ENCODE measurements at regions of chr7 and their contacts with region 1.

Region 1: DNA sequence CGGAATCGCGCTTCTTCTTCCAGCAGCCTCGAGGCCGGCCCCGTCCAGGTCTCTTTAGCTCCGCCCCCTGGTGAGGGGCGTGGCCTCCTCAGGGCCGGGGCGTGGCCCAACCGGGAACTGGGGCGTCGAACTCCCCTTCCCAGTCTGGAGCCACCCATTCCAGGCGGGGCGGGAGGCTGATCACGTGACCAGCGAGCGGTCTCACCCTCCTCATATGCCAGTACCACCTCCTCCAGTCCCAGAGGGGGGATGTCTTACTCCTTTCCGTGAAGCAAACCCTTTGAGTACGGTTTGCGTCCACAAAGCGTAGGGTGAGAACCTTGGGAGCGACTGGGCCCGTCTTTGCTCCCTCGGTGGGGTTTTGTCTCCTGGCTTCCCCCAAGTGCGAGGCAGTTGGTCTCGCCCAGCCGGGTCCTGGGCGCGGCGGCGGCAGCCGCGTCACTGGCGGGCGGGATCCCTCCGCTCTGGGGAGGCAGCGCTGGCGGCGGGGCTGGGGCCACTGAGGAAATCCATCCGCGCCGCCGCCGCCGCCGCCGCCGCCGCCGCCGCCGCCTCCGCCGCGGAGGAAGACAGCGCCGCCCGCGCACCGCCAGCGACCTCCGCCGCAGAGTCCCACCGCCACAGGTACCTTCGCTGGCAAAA is at the start of gene GNB2:
- DNase-seq: peak; percentile 99
- ATAC-seq: peak; percentile 92 to 95 (median 94)
- H3K4me3 ChIP-seq: peak within 1 kb of the TSS; percentile 95 to 99 (median 96)
- H3K27ac ChIP-seq: peak within 1 kb of the TSS; percentile 78 to 100 (median 98)
- H3K4me1 ChIP-seq: peaks cover 0 to 34% (median 22%) of the 10 kb centered on the region in 9 donors
- H3K27me3 ChIP-seq: no peaks in the 10 kb centered on the region
- CTCF ChIP-seq: no peak
- total RNA-seq, gene GNB2: 91.6 to 150 (median 106) TPM

Region 2: GRCh38 chr7:100429637-100430492 is 243.6 kb before region 1 on chr7 and contains the start of gene MEPCE:
- intact Hi-C with region 1: loop called in 1 of 10 experiments (anchors 5 kb)
- DNase-seq: peak; percentile 97
- ATAC-seq: peak; percentile 72 to 85 (median 77)
- H3K4me3 ChIP-seq: peak within 1 kb of the TSS; percentile 77 to 100 (median 92)
- H3K27ac ChIP-seq: peak within 1 kb of the TSS; percentile 98 to 100 (median 99)
- H3K4me1 ChIP-seq: peaks cover 8 to 55% (median 38%) of the 10 kb centered on the region in 9 donors
- H3K27me3 ChIP-seq: no peaks in the 10 kb centered on the region
- CTCF ChIP-seq: no peak
- total RNA-seq, gene MEPCE: 17.2 to 27.7 (median 23.0) TPM

Region 3: GRCh38 chr7:100586266-100587025 is 87.0 kb before region 1 on chr7 and contains the start of gene FBXO24:
- intact Hi-C with region 1: loop called in 1 of 10 experiments (anchors 1 kb)
- DNase-seq: peak; percentile 100
- ATAC-seq: peak; percentile 91 to 97 (median 94)
- H3K4me3 ChIP-seq: peak within 1 kb of the TSS; percentile 80 to 100 (median 96)
- H3K27ac ChIP-seq: peak within 1 kb of the TSS; percentile 90 to 98 (median 94)
- H3K4me1 ChIP-seq: peaks cover 9 to 67% (median 52%) of the 10 kb centered on the region in 9 donors
- H3K27me3 ChIP-seq: peaks cover 0 to 14% (median 0%) of the 10 kb centered on the region in 7 donors
- CTCF ChIP-seq: peak in 1 of 9 donors; percentile 10
- total RNA-seq, gene FBXO24: 0.15 to 0.66 (median 0.40) TPM in 8 of 10 donors, not detected in the others

Region 4: DNA sequence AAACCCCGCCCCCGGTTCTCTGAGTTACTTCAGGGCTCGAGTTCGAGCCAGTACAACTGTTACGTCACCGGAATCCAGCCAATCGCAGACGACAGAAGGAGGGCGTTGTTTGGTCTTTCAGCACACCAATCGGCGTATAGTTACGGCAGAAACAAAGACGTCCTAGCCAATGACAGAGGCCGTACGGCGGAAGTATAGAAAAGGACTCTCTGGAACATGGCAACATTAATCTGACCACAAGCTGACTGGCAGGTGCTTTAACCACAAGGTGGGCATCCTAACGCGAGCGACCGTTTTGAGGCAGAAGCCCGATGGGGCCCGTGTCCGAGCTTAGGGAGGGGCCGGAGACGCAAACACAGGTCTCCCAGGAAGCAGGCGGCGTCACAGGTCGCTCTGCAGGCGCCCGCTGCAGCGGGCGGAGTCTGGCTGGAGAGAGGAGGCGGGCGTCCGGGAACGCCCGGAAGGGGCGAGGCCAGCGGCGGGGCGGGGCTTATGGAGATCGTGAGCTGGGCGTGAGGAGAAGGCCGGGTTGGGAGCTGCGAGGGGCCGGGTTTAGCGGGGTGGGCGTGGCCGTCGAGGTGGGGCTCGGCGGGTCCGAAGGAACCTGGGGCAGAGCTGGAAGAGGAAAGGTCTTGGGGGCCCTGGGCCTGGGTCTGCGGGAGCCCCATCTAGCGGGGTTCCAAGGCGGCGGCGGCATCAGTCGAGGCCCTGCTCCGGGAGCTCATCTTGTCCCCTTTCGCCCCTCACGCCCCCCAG is 61.3 kb before region 1 on chr7 and contains the start of gene MOSPD3:
- intact Hi-C with region 1: loop called in 6 of 10 experiments (anchors 1 to 5 kb)
- DNase-seq: peak; percentile 99
- ATAC-seq: peak; percentile 97 to 99 (median 98)
- H3K4me3 ChIP-seq: peak within 1 kb of the TSS; percentile 57 to 97 (median 83)
- H3K27ac ChIP-seq: peak within 1 kb of the TSS; percentile 65 to 97 (median 91)
- H3K4me1 ChIP-seq: peaks cover 0 to 20% (median 10%) of the 10 kb centered on the region in 9 donors
- H3K27me3 ChIP-seq: no peaks in the 10 kb centered on the region
- CTCF ChIP-seq: no peak
- total RNA-seq, gene MOSPD3: 8.0 to 12.5 (median 9.9) TPM

Region 5: GRCh38 chr7:100691676-100692577 is 18.5 kb after region 1 on chr7:
- intact Hi-C with region 1: loop called in 1 of 10 experiments (anchors 2 kb)
- DNase-seq: peak; percentile 81 to 83
- ATAC-seq: peak; percentile 72 to 92 (median 86)
- H3K4me3 ChIP-seq: peak overlapping the region in 9 of 10 donors; percentile 3 to 99 (median 80)
- H3K27ac ChIP-seq: peak overlapping the region in 6 of 10 donors; percentile 15 to 87 (median 46)
- H3K4me1 ChIP-seq: peaks cover 34 to 67% (median 51%) of the 10 kb centered on the region in 9 donors
- H3K27me3 ChIP-seq: no peaks in the 10 kb centered on the region
- CTCF ChIP-seq: peak; percentile 70 to 92 (median 90)

Measured in heart right ventricle (tissue), 16 donors.